Activated T-helper 2 cell treated with anti-CD3 and anti-CD28 coated beads, Interferon-gamma antibody, Interleukin-2, Interleukin-4, amounts not matched to agents 10 μg/mL and 5 μg/mL and 100 μg/mL, durations not matched to agents 14 hours and 24 hours and 36 hours (primary cell): ENCODE measurements at regions of chr19 and their contacts with region 1.

Region 1: GRCh38 chr19:56314562-56315077 is at the start of gene ZSCAN5A:
- DNase-seq: peak; percentile 94
- H3K4me3 Mint-ChIP-seq: peak within 1 kb of the TSS; percentile 93
- H3K27ac Mint-ChIP-seq: peak within 1 kb of the TSS; percentile 99
- H3K4me1 Mint-ChIP-seq: peaks cover 14% of the 10 kb centered on the region
- H3K27me3 Mint-ChIP-seq: no peaks in the 10 kb centered on the region
- total RNA-seq, gene ZSCAN5A: 9.1 and 10.3 TPM in 2 replicates

Region 2: DNA sequence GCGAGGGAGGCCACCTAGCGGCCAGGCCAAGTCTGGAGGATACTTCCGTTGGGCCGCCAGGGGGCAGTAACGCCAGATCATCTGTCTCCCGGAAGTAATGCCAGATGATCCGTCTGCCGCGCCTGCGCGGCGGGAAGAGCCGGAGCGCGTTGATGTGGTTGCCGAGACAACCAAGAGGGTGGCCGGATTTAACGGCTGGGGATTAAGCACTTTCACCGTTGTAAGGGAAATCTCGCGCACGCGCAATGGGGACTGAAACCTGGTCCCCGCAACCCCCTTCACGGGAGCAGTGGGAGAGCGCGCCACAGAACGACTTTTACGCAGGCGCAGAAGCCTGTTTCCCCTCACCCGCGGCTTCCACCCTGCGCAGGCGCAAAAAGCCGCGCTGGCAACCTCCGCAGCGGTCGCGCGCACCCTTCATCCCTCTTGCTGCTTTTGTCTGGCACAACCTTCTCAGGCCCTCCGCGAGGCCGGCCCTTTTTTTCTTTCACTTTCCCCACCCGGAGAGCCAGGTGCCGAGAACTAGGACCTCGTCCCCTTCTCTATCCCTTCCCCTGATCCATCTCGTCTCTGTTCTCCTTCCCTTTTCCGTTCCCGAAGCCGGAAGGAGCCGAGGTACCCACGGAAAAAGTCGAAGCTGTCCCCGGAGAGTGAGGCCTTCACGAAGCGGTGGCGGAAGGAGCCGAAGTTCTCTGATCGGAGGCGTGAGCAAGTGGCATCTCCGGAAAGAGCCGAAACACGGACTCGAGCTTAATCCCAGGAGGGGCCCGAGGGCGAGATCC is 660.7 kb before region 1 on chr19:
- intact Hi-C with region 1: loop called (anchors 10 kb)
- DNase-seq: peak; percentile 99
- H3K4me3 Mint-ChIP-seq: peak overlapping the region; percentile 91
- H3K27ac Mint-ChIP-seq: peak overlapping the region; percentile 99
- H3K4me1 Mint-ChIP-seq: peaks cover 27% of the 10 kb centered on the region
- H3K27me3 Mint-ChIP-seq: no peaks in the 10 kb centered on the region

Region 3: GRCh38 chr19:56121180-56122167 is 193.1 kb before region 1 on chr19 and contains the start of gene ZNF787:
- intact Hi-C with region 1: loop called (anchors 2 kb)
- DNase-seq: peak; percentile 94
- H3K4me3 Mint-ChIP-seq: peak within 1 kb of the TSS; percentile 87
- H3K27ac Mint-ChIP-seq: peak within 1 kb of the TSS; percentile 95
- H3K4me1 Mint-ChIP-seq: peaks cover 19% of the 10 kb centered on the region
- H3K27me3 Mint-ChIP-seq: no peaks in the 10 kb centered on the region
- total RNA-seq, gene ZNF787: 35.7 and 37.8 TPM in 2 replicates

Region 4: GRCh38 chr19:56140583-56141416 is 173.8 kb before region 1 on chr19 and contains the start of gene ZNF444:
- intact Hi-C with region 1: loop called (anchors 1 kb)
- DNase-seq: peak; percentile 99
- H3K4me3 Mint-ChIP-seq: peak within 1 kb of the TSS; percentile 83
- H3K27ac Mint-ChIP-seq: peak within 1 kb of the TSS; percentile 81
- H3K4me1 Mint-ChIP-seq: peaks cover 21% of the 10 kb centered on the region
- H3K27me3 Mint-ChIP-seq: no peaks in the 10 kb centered on the region
- total RNA-seq, gene ZNF444: 30.3 and 35.5 TPM in 2 replicates

Region 5: DNA sequence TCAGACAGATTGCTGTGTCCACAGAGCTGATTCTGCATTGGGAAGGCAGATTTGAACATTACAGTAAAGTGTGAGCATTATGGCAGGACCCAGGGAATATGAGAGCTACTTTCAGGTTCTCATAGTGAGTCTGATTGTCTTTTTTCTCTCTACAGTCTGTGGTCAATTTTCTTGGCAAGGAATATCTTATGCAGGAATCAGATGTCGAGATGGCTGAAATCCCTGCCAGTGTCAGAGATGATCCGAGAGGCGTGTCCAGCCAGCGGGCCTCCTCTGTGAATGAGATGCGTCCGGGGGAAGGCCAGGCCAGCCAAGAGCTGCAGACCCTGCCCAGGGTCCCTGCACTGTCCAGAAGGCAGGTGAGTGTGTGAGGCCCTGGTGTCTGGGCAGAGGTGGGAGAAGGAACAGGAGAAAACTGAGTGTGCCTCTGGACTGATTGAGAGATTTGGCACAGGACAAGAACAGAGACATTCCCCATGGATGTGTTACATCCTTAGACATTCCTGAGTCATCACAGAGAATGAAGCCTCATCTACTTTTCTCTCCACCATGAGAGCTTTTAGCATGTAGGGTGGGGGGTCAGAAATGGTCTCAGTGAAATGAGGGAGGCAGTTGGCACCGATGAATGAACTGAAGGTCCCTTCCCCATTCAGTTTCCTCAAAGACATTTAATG is 69.4 kb before region 1 on chr19:
- intact Hi-C with region 1: no loop called
- DNase-seq: no peak
- H3K4me3 Mint-ChIP-seq: no peak overlapping the region
- H3K27ac Mint-ChIP-seq: no peak overlapping the region
- H3K4me1 Mint-ChIP-seq: no peaks in the 10 kb centered on the region
- H3K27me3 Mint-ChIP-seq: no peaks in the 10 kb centered on the region

Region 6: DNA sequence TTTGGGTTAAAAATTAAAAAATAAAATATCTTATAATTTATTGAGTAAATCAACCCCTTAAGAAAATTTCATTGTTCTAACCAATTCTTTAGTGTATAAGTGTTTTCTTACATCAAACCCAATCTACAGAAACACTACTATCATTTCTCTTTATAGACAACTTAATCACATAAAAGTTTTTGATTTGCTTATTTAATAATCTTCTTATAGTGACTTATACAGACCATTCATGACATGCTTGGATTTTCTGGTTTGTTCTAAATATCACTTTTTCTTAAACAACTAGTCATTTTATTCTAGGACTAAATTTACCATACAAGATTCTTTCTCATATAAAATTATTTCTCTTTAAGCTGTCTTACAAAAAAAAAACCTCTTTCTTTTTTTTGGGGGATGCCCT is 27.3 kb after region 1 on chr19:
- intact Hi-C with region 1: no loop called
- DNase-seq: no peak
- H3K4me3 Mint-ChIP-seq: no peak overlapping the region
- H3K27ac Mint-ChIP-seq: no peak overlapping the region
- H3K4me1 Mint-ChIP-seq: no peaks in the 10 kb centered on the region
- H3K27me3 Mint-ChIP-seq: no peaks in the 10 kb centered on the region

Region 7: DNA sequence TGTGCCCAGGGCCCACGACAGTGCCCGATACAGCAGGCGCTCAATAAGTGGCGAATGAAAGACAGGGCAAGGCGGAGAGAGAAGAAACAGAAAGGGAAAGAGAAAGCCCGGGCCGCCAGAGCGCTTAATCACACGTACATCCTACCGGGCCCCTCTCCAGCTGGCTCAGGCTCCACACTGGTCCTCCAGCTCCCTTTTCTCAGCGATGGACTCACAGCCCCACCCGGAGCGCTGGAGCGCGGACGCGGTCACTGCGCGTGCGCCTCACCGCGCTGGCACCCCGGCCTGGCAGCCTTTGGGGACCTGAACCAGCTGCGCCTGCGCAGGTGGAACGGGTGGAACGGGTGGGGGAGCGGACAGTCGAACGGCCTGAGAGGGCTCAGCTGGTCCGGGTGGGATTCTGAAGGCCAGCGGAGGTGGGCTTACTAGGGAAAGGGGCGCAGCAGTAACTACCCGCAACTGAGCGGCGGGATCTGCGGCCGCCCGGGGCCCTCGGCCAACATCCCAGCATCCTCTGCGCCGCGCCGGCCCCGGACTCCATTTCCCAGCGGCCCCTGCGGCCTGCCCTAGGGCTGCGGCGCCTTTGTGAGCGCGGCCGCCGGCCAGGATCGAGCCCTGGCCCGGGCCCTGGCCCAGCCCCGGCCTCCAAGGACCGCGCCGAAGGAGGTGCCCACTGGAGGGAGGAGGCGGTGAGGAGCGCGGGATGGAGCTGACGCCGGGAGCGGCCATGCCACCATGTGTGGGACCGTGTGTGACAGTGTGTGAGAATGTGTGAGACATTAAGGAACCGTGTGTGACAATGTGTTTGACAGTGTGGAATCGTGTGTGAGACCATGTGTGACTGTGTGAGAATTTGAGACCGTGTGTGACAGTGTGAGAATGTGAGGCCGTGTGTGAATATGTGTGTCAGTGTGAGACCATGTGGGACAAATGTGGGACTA is 89.4 kb after region 1 on chr19 and contains the start of gene ZNF583:
- intact Hi-C with region 1: loop called (anchors 10 kb)
- DNase-seq: peak; percentile 86
- H3K4me3 Mint-ChIP-seq: peak within 1 kb of the TSS; percentile 85
- H3K27ac Mint-ChIP-seq: peak within 1 kb of the TSS; percentile 96
- H3K4me1 Mint-ChIP-seq: peaks cover 14% of the 10 kb centered on the region
- H3K27me3 Mint-ChIP-seq: no peaks in the 10 kb centered on the region
- total RNA-seq, gene ZNF583: 1.5 and 1.7 TPM in 2 replicates